ENCODE measurements at regions of chr4 and their contacts with region 1.

Region 1: DNA sequence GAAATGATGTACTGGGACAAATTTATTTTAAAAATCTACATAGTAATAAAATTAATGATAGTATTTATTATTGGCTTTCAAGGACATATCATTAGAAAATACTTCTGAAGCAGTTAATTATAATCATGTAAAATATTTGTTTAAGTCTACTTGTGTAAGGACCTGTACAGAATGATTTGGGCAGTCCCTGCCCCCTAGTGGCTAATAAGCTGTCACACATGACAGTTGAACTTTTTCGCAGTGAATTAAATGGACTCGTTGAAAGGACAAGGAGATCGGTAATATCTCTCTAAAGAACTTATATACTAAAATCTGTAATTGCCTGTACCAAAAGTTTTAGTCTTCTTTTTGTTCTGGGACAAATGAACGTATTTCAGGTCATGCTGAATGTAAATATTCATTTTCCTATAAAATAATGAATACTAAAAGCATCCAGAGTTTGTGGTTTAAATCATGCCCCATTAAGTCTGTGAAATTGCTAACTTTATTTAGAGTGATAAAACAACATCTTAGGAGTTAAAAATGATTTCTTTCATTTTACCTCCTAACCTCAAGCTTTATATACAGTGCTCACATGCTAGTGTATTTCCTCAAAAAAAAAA is 13.6 kb downstream of the EXOC1 start:
- DNase-seq: peak; percentile 13
- H3K4me3 Mint-ChIP-seq: no peak overlapping the region
- H3K27ac Mint-ChIP-seq: no peak overlapping the region
- H3K4me1 Mint-ChIP-seq: peaks cover 16% of the 10 kb centered on the region
- H3K27me3 Mint-ChIP-seq: no peaks in the 10 kb centered on the region

Region 2: GRCh38 chr4:54971474-54971950 is 895.6 kb before region 1 on chr4:
- CTCF ChIA-PET with region 1: no interaction called
- intact Hi-C with region 1: loop called (anchors 2 kb)
- DNase-seq: peak; percentile 27
- H3K4me3 Mint-ChIP-seq: no peak overlapping the region
- H3K27ac Mint-ChIP-seq: no peak overlapping the region
- H3K4me1 Mint-ChIP-seq: peaks cover 2% of the 10 kb centered on the region
- H3K27me3 Mint-ChIP-seq: peaks cover 5% of the 10 kb centered on the region

Region 3: DNA sequence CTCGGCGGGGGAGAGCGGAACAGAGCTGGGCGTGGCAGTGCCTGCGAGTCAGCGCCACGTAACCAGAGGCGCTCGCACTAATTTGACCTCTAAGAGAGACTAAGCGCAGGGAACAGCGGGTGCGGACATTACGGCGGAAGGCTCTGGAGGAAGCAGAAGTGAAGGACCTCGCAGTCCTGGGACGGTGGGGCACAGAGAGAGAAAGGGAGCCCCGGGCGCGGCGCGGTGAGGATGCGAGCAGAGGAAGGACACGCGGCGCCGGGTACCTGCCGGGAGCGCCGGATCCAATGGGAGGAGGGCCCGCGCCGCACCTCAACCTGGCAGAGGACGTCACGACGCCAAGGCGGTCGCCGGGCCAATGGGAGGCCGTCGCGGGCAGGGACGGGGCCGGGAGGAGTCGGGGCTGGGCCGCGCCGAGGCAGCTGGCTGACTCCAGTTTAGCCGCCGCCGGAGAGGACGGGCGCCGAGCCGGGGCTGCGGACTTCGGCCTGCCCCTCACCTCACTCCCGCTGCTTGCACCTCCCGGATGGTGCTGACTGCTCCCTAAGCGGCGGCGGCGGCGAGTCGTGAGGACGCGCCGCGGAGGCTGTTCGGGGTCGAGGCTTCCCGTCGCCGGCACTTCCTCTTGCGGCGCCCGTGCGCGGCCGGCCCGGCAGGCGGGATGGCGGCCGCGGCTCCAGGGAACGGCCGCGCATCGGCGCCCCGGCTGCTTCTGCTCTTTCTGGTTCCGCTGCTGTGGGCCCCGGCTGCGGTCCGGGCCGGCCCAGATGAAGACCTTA is 471.4 kb before region 1 on chr4 and contains the start of gene TMEM165:
- CTCF ChIA-PET with region 1: no interaction called
- intact Hi-C with region 1: loop called (anchors 2 kb)
- DNase-seq: peak; percentile 92
- H3K4me3 Mint-ChIP-seq: peak within 1 kb of the TSS; percentile 96
- H3K27ac Mint-ChIP-seq: peak within 1 kb of the TSS; percentile 89
- H3K4me1 Mint-ChIP-seq: peaks cover 39% of the 10 kb centered on the region
- H3K27me3 Mint-ChIP-seq: no peaks in the 10 kb centered on the region
- total RNA-seq, gene TMEM165: 39.1 to 40.6 TPM

Region 4: DNA sequence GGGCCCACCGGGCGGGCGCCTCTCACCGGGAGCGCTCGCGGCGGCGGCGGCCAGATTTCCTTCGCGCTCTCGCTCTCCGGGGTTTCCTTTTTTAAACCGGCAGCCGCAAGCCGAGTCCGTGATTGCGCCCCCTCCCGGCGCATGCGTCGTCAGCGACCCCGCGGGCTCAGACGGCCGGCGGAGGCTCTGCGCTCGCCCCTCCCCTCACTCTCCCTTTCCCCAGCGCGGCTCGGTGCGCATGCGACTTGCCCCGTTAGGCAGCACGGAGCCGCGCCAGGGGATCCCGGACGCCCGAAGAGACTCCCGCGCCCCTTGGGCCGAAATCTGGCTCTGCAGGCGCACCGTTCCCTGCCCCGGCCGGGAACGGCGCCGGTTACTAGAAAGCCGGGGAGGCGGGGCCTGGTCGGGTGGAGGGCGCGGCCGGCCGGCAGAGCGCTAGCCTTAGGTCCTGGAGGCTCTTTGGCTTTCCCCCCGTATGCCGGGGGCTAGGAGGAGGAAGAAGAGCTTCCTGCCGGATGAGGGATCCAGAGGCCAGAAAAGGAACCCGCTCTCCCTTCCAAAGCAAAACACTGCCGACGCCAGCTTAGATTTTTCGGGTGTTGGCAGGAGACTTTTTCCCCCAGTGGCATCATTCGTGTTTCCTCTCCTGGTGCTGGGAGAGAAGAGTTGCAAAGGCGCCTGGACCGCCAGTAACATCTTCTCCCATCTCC is 320.2 kb before region 1 on chr4 and contains the start of gene CLOCK:
- CTCF ChIA-PET with region 1: interaction called, 4 read pairs
- intact Hi-C with region 1: loop called (anchors 5 kb)
- DNase-seq: peak; percentile 83
- H3K4me3 Mint-ChIP-seq: peak within 1 kb of the TSS; percentile 84
- H3K27ac Mint-ChIP-seq: peak within 1 kb of the TSS; percentile 89
- H3K4me1 Mint-ChIP-seq: peaks cover 50% of the 10 kb centered on the region
- H3K27me3 Mint-ChIP-seq: no peaks in the 10 kb centered on the region
- total RNA-seq, gene CLOCK: 8.1 to 8.5 TPM

Region 5: GRCh38 chr4:55736605-55737183 is 130.4 kb before region 1 on chr4:
- CTCF ChIA-PET with region 1: interaction called, 5 read pairs
- intact Hi-C with region 1: loop called (anchors 5 kb)
- DNase-seq: no peak
- H3K4me3 Mint-ChIP-seq: no peak overlapping the region
- H3K27ac Mint-ChIP-seq: no peak overlapping the region
- H3K4me1 Mint-ChIP-seq: no peaks in the 10 kb centered on the region
- H3K27me3 Mint-ChIP-seq: peaks cover 34% of the 10 kb centered on the region

Region 6: DNA sequence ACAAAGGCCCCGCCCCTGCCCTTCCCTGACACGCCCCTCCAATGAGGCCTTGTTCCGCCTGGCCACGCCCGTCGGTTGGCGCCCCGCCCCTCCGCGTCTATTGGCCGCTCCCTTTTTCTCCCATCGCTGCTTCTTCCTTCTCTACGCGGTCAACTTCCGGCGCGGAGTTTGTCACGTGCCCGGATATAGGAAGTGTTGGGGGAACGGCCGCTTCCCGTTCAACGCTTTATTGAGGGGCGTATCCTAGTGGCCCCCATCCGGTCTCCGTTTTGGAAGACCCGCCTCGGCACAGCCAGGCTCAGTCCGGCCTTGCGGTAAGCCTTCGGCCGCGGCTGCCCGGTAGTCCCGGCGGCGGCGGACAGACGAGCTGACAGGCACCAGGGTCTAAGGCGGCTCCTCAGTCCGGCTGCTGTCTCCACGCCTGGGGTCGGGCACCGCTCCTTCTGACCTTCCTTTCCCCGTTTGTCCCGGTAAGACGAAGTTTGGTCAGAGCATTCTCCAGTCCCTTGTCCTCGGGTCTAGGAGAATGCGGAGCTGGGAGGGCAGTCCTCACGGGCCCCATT is 13.5 kb before region 1 on chr4 and contains the start of gene EXOC1:
- CTCF ChIA-PET with region 1: interaction called, 15 read pairs
- intact Hi-C with region 1: no loop called
- DNase-seq: peak; percentile 99
- H3K4me3 Mint-ChIP-seq: peak within 1 kb of the TSS; percentile 32
- H3K27ac Mint-ChIP-seq: peak within 1 kb of the TSS; percentile 86
- H3K4me1 Mint-ChIP-seq: peaks cover 28% of the 10 kb centered on the region
- H3K27me3 Mint-ChIP-seq: no peaks in the 10 kb centered on the region
- total RNA-seq, gene EXOC1: 18.7 to 21.9 TPM

Region 7: GRCh38 chr4:57448452-57448851 is 1581.4 kb after region 1 on chr4:
- CTCF ChIA-PET with region 1: no interaction called
- intact Hi-C with region 1: no loop called
- DNase-seq: no peak
- H3K4me3 Mint-ChIP-seq: no peak overlapping the region
- H3K27ac Mint-ChIP-seq: no peak overlapping the region
- H3K4me1 Mint-ChIP-seq: no peaks in the 10 kb centered on the region
- H3K27me3 Mint-ChIP-seq: no peaks in the 10 kb centered on the region

Measured in activated naive CD4-positive, alpha-beta T cell treated with anti-CD3 and anti-CD28 coated beads for 36 hours (primary cell).